ENCODE measurements at regions of chr11 and their contacts with region 1.

Region 1: DNA sequence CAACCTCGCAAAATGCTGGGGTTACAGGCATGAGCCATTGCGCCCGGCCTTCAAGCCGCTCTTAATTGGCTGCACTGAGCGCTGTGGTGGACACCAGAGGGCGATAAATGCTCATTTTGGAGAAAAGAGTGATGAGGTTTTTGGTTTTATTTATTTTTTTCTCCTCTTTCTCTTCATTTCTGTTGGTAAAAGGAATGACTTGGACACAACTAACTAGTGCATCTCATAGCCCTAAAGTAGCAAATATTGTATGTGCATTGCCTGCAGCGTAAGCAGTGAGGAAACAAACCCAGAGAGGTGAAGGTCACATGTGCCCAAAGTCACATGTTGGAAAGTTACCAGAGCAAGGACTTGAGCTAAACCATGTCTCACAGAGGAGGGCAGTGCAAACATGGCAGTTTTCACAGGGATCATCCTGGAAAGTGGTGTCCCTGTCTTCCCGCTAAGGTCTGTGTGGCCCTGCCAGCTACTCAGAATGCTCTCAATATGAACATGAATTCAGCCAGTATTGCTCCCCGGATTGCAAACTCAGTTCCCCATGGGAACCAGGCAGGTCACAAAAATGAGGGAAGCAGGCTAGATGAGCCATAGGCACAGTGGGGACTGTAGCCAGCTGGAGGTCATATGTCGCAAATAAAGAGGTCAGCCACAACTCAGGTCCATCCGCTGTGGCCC is 8.6 kb upstream of the CD82 start:
- DNase-seq: peak; percentile 70 to 72
- H3K4me3 ChIP-seq: no peak overlapping the region
- H3K27ac ChIP-seq: no peak overlapping the region
- H3K4me1 ChIP-seq: no peaks in the 10 kb centered on the region
- H3K27me3 ChIP-seq: no peaks in the 10 kb centered on the region
- CTCF ChIP-seq: peak; percentile 65 to 97 (median 80)
- POLR2A ChIP-seq: no peak

Region 2: DNA sequence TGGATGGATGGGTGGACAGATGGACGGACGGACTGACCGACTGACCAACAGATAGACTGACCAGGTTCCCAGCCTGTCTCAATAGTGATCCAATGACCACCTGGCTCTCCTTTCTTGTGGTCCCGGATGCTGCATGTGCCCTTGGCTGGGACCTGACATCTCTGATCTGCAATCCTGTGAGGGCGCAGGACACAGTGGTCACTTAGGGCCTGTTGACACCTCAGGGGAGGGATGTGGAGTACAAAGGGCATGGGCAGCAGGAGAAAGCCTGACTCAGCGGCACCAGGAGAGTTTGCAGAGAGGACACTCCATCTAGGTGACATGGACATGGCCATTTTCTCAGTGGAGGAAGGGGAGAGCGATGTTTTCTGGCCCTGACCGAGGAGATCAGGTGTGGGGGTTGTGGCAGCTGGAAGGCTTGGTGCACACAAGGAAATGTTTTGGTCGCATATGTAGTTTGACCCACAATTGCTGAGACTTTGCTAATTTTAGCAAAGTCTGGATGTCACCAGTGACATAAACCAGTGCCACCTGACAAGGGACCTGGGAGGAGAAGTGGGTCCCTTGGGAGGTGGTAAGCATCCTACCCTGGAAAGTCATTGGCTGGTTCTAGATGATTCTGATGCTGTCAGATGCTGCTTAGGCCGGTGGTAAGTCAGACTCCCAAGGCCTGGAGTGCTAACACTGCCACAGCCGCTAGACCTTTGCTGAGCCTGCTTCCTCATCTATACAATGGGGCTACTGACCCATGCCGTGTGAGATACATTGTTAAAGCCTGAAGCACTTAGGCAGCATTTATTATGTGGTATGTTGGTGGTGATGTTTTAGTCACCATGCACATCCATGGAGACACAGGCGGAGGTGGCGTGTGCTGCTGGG is 59.3 kb after region 1 on chr11:
- intact Hi-C with region 1: loop called (anchors 2 kb)
- DNase-seq: no peak
- H3K4me3 ChIP-seq: no peak overlapping the region
- H3K27ac ChIP-seq: no peak overlapping the region
- H3K4me1 ChIP-seq: peaks cover 0 to 4% of the 10 kb centered on the region in 2 donors
- H3K27me3 ChIP-seq: no peaks in the 10 kb centered on the region
- CTCF ChIP-seq: no peak
- POLR2A ChIP-seq: no peak

Region 3: DNA sequence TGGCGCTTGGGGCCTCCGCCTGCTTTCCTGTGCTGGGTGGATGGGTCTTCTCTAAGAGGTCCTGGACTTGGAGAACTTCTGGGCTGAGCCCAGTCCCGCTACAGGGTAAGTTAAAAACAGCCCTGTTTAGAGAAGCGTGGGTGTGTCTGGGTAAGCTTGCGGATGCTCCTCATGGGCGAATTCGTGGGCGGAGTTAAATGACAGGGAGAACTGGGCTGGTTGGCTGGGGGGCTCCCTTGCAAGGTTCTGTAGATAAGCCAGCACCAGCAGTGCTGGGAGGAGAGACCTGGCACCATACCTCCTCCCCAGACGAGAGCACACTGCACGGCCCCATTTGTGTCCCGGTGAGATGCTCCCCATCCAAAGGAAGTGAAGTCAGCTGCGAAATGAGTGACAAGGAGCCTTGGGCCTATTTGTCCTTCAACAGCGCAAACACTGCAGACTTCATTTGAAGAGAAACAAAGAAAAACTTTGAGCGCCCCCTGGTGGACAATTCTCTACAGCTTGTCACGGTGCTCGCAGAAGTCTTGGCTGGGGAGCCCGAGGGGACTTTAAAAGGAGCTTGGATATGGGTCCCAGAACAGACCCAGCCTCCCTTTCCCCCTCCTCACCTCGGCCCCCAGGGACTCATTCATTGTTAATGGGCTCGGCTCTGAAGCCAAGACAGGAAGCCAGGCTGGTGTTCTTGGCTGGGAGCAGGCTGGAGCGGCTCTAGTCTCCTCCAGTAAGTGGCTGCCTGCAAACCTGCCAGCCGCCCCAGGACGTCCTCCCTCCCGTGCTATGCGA is 354.4 kb after region 1 on chr11:
- intact Hi-C with region 1: loop called (anchors 5 kb)
- DNase-seq: peak; percentile 83 to 88
- H3K4me3 ChIP-seq: no peak overlapping the region
- H3K27ac ChIP-seq: no peak overlapping the region
- H3K4me1 ChIP-seq: peaks cover 0 to 13% of the 10 kb centered on the region in 2 donors
- H3K27me3 ChIP-seq: no peaks in the 10 kb centered on the region
- CTCF ChIP-seq: peak; percentile 60 to 95 (median 77)
- POLR2A ChIP-seq: no peak